MCF 10A (cell line): ENCODE measurements at regions of chr22 and their contacts with region 1.

Region 1: DNA sequence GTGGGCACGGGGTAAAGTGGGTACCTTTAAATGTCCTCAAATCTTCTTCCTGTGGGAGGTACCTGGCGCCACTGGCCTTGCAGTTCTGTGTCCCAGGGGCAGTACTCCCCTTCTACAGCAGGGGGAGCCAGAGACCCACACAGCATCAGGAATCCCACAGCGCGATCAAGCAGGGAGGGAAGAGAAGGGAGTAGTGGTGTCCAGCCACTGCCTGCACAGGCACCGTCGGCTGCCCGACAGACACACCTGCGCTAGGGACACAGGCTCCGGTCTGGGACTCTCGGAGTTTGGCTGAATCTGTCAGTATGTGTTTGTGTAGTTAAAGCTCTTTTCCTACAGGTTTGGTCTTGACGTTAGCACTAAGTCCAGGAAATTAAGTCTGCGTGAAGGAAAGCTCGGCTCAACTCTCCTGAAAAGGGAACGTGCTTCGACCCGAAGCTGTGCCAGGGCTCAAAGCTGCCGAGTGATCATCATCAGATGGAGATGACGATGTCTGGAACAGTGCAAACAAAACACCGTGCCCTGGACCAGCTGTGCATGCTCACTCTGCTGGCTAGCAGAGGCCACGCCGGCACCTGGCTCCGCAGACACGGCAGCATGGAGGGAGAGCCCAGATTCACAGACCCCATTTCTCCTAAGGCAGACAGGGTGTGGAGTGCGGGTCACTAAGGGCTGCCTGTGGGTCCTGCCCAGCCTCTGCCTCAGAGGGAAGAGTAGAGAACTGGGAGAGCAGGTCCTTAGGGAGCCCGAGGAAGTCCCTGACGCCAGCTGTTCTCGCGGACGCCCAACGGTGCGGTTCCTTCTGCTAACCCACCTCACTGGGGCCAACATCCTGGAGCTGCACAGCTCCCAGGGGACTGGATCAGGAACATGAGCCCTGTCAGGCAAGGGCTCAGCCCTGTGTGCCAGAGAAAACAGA is 56.0 kb upstream of the BID start:
- DNase-seq: peak; percentile 87
- H3K4me3 Mint-ChIP-seq: no peak overlapping the region
- H3K27ac Mint-ChIP-seq: no peak overlapping the region
- H3K4me1 Mint-ChIP-seq: no peaks in the 10 kb centered on the region
- H3K27me3 Mint-ChIP-seq: no peaks in the 10 kb centered on the region
- CTCF ChIP-seq: peak; percentile 99

Region 2: GRCh38 chr22:17742527-17742902 is 87.8 kb before region 1 on chr22:
- CTCF ChIA-PET with region 1: interaction called, 14 read pairs
- POLR2A ChIA-PET with region 1: no interaction called
- intact Hi-C with region 1: no loop called
- DNase-seq: peak; percentile 76
- H3K4me3 Mint-ChIP-seq: no peak overlapping the region
- H3K27ac Mint-ChIP-seq: no peak overlapping the region
- H3K4me1 Mint-ChIP-seq: no peaks in the 10 kb centered on the region
- H3K27me3 Mint-ChIP-seq: no peaks in the 10 kb centered on the region
- CTCF ChIP-seq: peak; percentile 82

Region 3: DNA sequence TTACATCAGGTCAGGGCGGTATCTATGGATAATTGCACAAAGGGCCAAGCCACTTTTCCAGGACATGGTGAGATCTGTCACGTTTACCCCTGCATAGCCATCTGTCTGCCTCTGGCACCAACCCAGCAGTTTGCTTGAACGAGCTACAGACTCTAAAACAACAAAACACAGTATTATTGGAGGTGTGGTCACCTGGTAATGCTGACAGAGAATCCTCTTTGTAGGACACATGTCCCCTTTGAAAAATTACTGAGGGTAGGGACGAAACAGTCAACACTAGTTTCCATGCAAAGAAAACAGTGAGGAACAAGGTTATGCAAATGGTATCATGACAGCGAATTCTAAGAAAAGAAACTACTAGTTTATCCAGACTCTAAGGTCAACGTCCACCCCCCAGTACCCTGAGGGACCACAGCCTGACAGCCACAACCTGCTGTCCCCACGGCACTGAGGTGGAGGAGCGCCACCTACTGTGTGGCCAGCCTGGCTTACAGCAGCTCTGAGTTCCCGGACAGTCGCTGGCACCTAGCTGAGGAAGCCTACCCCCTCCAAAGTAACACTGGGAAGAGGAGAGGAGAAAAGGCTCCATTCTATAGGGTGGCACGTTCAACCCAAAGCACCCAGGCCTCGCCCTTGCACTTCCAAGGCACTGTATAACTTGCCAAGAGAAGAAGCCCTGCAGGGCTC is 61.3 kb after region 1 on chr22:
- CTCF ChIA-PET with region 1: interaction called, 25 read pairs
- POLR2A ChIA-PET with region 1: no interaction called
- intact Hi-C with region 1: no loop called
- DNase-seq: no peak
- H3K4me3 Mint-ChIP-seq: no peak overlapping the region
- H3K27ac Mint-ChIP-seq: no peak overlapping the region
- H3K4me1 Mint-ChIP-seq: peaks cover 7% of the 10 kb centered on the region
- H3K27me3 Mint-ChIP-seq: no peaks in the 10 kb centered on the region
- CTCF ChIP-seq: peak; percentile 13

Region 4: GRCh38 chr22:18024276-18024947 is 194.1 kb after region 1 on chr22 and contains the start of gene MICAL3:
- CTCF ChIA-PET with region 1: interaction called, 17 read pairs
- POLR2A ChIA-PET with region 1: interaction called, 4 read pairs
- intact Hi-C with region 1: loop called (anchors 1 kb)
- DNase-seq: peak; percentile 66
- H3K4me3 Mint-ChIP-seq: peak within 1 kb of the TSS; percentile 85
- H3K27ac Mint-ChIP-seq: peak within 1 kb of the TSS; percentile 17
- H3K4me1 Mint-ChIP-seq: peaks cover 21% of the 10 kb centered on the region
- H3K27me3 Mint-ChIP-seq: no peaks in the 10 kb centered on the region
- CTCF ChIP-seq: peak; percentile 53
- total RNA-seq, gene MICAL3: 54.1 and 62.1 TPM in 2 replicates

Region 5: DNA sequence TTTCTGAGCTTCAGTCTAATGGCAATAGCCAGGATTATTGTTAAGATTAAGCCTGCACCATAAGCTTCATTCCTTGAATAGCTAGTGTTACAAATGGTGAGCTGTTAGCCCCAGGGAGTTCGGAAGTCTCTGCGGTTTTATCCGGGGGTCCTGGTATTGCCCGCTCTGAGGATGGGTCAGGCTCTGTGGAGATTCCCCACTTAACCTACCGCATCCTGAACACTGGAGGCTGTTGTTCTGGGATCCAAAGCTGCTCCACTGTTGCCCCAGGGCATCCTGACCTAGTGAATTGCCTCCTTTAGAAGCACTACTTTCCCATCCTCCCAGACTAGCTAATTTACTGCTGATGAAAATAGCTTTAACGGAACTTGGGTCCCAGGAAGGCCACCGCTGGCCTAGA is 233.0 kb after region 1 on chr22:
- CTCF ChIA-PET with region 1: interaction called, 10 read pairs
- POLR2A ChIA-PET with region 1: interaction called, 3 read pairs
- intact Hi-C with region 1: no loop called
- DNase-seq: no peak
- H3K4me3 Mint-ChIP-seq: no peak overlapping the region
- H3K27ac Mint-ChIP-seq: no peak overlapping the region
- H3K4me1 Mint-ChIP-seq: peaks cover 27% of the 10 kb centered on the region
- H3K27me3 Mint-ChIP-seq: no peaks in the 10 kb centered on the region
- CTCF ChIP-seq: no peak